ENCODE measurements at regions of chr7 and their contacts with region 1.

Region 1: GRCh38 chr7:105652359-105652993 is 71.2 kb upstream of the EFCAB10 start:
- DNase-seq: peak; percentile 81
- ATAC-seq: peak; percentile 95
- H3K4me3 Mint-ChIP-seq: no peak overlapping the region
- H3K27ac Mint-ChIP-seq: no peak overlapping the region
- H3K4me1 Mint-ChIP-seq: peaks cover 5% of the 10 kb centered on the region
- H3K27me3 Mint-ChIP-seq: no peaks in the 10 kb centered on the region
- CTCF ChIP-seq: peak; percentile 85

Region 2: DNA sequence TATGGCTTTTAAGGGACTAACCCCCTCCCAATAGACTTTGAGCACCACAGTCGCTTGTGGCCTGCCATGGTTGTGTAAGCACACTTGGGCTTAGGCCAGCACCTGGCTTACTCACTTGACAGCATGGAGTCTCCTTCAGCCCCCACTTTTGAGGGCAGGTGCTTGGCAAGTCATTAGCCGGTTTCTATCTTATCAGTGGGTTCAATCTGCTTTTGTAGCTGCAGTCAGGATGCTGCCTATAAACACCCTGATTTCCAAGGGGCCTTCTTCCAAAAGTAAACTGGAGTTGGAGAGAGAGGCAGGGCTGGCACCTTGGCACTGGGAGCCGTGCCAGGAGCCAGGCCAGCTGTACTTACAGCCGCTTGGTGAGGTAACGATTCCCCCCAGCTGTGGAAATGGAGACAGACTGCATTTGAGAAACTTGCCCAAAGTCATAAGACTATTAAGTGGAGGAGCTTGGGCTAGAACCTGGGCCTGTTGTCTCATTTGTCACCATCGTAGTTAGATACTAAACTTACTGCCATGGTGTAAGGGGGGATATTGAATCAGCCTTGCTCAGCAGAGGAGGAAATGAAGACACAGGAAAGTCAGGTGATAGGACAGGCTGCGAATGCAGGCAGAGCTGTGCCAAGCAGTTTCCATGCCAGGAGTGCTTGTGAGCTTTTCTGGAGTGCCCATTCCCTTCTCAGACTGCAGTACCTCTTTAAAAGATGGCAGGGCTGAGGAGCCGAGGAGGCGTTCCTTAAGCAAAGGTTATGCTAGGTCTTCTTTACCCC is 21.1 kb after region 1 on chr7:
- CTCF ChIA-PET with region 1: interaction called, 48 read pairs
- POLR2A ChIA-PET with region 1: no interaction called
- intact Hi-C with region 1: no loop called
- DNase-seq: peak; percentile 13
- ATAC-seq: no peak
- H3K4me3 Mint-ChIP-seq: no peak overlapping the region
- H3K27ac Mint-ChIP-seq: peak overlapping the region; percentile 9
- H3K4me1 Mint-ChIP-seq: peaks cover 60% of the 10 kb centered on the region
- H3K27me3 Mint-ChIP-seq: no peaks in the 10 kb centered on the region
- CTCF ChIP-seq: no peak

Region 3: GRCh38 chr7:105713488-105714465 is 61.3 kb after region 1 on chr7:
- CTCF ChIA-PET with region 1: interaction called, 12 read pairs
- POLR2A ChIA-PET with region 1: no interaction called
- intact Hi-C with region 1: no loop called
- DNase-seq: no peak
- ATAC-seq: no peak
- H3K4me3 Mint-ChIP-seq: no peak overlapping the region
- H3K27ac Mint-ChIP-seq: no peak overlapping the region
- H3K4me1 Mint-ChIP-seq: no peaks in the 10 kb centered on the region
- H3K27me3 Mint-ChIP-seq: no peaks in the 10 kb centered on the region
- CTCF ChIP-seq: no peak

Region 4: DNA sequence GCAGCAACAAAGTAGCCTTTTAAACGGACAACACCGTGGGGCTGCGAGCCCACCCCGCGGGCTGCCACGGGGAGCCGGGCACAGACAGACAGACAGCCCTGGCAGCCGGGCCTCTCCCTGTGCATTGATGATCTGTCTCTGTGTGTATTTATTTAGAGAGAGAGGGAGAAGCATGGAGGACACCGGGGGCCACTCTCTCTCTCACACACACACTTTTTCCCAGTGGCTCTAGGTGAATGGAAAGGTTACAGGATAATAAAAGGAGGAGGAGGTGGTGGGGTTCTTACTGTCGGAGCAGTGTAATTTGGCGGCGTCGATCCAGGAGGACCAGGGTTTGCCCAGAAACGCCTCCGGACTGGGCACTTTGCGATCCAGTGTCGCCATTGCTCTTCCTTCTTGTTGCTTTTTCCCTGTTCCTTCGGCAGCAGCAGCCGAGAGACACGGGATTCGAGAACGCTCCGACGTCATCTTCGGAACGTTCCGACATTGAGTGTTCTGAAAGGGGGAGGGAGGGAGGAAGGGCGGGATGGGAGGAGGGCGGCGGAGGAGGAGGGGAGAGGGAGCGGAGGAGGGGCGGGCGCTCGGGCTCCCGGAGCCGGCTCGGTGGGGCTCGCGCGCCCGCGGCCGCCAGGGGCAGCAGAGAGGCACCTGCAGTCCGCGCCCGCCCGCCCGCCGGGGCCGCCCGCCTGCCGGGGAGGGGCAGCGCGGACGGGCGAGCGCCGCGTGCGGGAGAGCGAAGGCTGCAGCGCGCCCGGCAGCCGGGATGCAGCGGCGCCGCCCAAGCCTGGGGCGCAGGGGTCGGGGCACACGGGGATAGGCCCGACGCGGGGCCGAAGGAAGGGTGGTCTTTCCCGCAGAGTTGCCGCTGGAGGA is 223.9 kb after region 1 on chr7 and contains the start of gene ATXN7L1:
- CTCF ChIA-PET with region 1: interaction called, 10 read pairs
- POLR2A ChIA-PET with region 1: no interaction called
- intact Hi-C with region 1: no loop called
- DNase-seq: peak; percentile 91
- ATAC-seq: peak; percentile 91
- H3K4me3 Mint-ChIP-seq: peak within 1 kb of the TSS; percentile 87
- H3K27ac Mint-ChIP-seq: peak within 1 kb of the TSS; percentile 85
- H3K4me1 Mint-ChIP-seq: peaks cover 56% of the 10 kb centered on the region
- H3K27me3 Mint-ChIP-seq: peaks cover 1% of the 10 kb centered on the region
- CTCF ChIP-seq: peak; percentile 58
- total RNA-seq, gene ATXN7L1: 4.8 to 5.3 TPM

Measured in activated CD8-positive, alpha-beta T cell treated with anti-CD3 and anti-CD28 coated beads for 36 hours (primary cell).